Naive thymus-derived CD8-positive, alpha-beta T cell (primary cell): ENCODE measurements at regions of chr4 and their contacts with region 1.

Region 1: DNA sequence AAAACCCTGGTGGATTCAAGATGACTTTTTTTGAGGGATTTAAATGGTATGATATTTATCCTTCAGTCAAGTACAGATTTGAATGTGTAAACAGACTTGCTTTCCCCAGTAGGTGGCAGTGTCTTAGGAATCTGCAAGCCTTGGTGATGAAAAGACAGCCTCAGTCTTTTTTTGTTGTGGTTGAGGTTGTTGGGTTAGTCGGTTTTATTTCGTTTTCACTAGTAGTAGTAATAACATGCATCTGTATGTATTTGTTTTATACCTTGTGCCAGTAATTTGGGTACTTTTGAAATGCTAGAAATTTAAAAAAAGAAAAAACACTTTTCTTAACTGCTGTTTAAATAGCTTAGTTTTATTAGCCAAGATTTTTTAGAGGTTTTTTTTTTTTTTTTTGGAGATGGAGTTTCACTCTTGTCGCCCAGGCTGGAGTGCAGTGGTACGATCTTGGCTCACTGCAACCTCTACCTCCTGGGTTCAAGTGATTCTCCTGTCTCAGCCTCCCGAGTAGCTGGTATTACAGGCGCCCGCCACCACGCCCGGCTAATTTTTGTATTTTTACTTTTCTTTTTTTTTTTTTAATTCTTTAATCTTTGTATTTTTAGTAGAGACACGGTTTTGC is 39.2 kb downstream of the COPS4 start:
- DNase-seq: peak in 9 of 10 donors; percentile 51 to 91 (median 77)
- ATAC-seq: peak; percentile 97 to 98
- H3K4me3 Mint-ChIP-seq: peak overlapping the region; percentile 39 to 84 (median 76)
- H3K27ac Mint-ChIP-seq: peak overlapping the region; percentile 0 to 90 (median 80)
- H3K4me1 Mint-ChIP-seq: peaks cover 5 to 27% (median 8%) of the 10 kb centered on the region in 4 donors
- H3K27me3 Mint-ChIP-seq: no peaks in the 10 kb centered on the region

Region 2: DNA sequence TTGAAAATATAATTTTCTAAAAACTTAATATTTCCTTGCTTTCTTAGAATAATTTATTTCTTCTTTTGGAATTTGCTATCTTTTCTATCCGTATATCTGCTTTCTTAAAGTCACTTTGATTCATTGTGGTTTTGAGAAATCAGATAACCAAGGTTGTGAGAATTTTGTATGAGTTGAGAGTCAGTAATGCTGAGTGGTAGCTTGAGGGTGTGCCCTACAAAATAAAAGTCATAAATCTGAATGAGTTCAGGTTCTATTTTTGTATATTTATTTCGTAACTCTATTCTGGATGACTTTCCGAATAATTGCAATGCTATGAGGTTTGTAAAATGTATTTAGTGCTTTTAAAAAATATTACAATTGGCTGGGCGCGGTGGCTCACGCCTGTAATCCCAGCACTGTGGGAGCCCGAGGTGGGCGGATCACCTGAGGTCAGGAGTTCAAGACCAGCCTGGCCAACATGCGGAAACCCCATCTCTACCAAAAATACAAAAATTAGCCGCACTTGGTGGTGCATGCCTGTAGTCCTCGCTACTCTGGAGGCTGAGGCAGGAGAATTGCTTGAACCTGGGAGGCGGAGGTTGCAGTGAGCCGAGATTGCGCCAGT is 30.3 kb before region 1 on chr4:
- POLR2A ChIA-PET with region 1: no interaction called
- DNase-seq: no peak
- ATAC-seq: no peak
- H3K4me3 Mint-ChIP-seq: no peak overlapping the region
- H3K27ac Mint-ChIP-seq: no peak overlapping the region
- H3K4me1 Mint-ChIP-seq: peaks cover 12 to 36% (median 27%) of the 10 kb centered on the region in 4 donors
- H3K27me3 Mint-ChIP-seq: no peaks in the 10 kb centered on the region

Region 3: DNA sequence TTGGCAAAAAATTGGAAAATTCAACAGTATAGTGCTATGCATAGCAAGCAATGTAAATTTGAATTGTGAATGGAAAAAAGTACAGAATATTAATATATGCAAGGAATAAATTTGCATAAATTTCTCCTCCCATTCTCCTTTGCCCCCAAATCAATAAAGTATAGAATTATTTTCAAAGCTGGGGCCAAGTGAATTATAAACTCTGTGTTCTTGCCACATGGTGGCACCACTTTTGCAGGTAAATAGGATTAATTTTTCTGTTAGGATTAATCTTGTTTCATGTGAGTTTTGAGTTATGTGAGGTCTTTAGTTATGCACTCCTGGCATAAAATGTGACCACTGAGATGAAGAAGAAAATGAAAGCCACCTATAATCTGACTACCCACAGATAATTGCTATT is 19.3 kb before region 1 on chr4:
- POLR2A ChIA-PET with region 1: interaction called, 11 read pairs
- DNase-seq: peak in 5 of 10 donors; percentile 5 to 38 (median 22)
- ATAC-seq: no peak
- H3K4me3 Mint-ChIP-seq: no peak overlapping the region
- H3K27ac Mint-ChIP-seq: no peak overlapping the region
- H3K4me1 Mint-ChIP-seq: peaks cover 0 to 7% (median 3%) of the 10 kb centered on the region in 4 donors
- H3K27me3 Mint-ChIP-seq: no peaks in the 10 kb centered on the region